T-cell (primary cell): ENCODE measurements at regions of chr4 and their contacts with region 1.

Region 1: DNA sequence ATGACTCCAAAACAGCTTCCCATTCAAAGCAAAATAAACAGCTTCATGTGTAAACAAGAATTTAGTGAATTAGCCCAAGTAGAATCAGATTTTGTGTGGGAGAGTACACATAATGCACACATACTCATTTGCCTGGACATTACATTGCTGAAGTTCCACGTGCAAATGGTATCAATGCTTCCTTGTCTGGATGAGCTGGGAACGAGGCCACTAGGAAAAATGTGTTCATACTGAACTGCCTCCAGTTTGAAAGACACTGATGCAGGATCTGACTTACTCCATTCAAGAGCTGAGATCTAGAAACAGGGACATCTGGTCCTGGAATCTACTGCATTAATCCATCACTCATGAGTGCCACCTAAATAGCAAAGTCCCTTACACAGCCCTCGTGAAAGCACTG is 228.0 kb downstream of the APBB2 start:
- DNase-seq: no peak
- ATAC-seq: no peak
- H3K4me3 ChIP-seq: no peak overlapping the region
- H3K4me3 Mint-ChIP-seq: no peak overlapping the region
- H3K27ac ChIP-seq: no peak overlapping the region
- H3K27ac Mint-ChIP-seq: no peak overlapping the region
- H3K4me1 ChIP-seq: no peaks in the 10 kb centered on the region
- H3K4me1 Mint-ChIP-seq: no peaks in the 10 kb centered on the region
- H3K27me3 ChIP-seq: peaks cover 0 to 3% of the 10 kb centered on the region in 2 experiments
- H3K27me3 Mint-ChIP-seq: peaks cover 0 to 6% of the 10 kb centered on the region in 2 donors

Region 2: DNA sequence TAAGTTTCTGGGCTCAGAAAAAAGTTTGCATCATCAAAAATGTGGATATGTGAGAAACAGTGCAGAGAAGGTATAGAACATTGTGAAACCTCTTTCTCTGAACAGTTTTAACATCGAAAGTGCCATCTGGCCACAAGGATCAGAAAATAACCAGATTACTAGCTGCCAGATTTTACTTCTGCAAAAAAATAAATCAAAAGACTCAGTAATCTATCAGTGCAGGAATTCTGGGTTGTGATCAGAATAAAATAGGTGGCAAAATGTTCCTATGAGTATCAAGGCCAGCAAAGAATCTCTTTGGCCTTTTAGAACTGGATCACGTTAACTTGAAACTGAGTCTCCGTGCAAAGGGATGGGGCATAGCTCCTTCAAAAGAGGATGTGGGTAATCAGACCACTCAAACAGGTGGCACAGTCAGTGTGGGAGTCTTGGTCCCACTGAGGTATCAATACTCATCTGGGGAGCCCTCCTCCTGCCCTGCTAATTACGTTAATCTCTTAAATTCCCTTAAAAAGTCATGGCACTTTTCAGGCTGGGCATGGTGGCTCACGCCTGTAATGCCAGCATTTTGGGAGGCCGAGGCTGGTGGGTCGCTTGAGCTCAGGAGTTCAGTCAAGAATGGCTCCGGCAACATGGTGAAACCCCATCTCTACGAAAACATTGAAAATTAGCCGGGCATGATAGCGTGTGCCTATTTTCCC is 330.0 kb before region 1 on chr4:
- CTCF ChIA-PET with region 1: no interaction called
- POLR2A ChIA-PET with region 1: interaction called in 1 of 2 experiments, 11 read pairs
- DNase-seq: no peak
- ATAC-seq: peak in 1 of 4 experiments; percentile 19
- H3K4me3 ChIP-seq: no peak overlapping the region
- H3K4me3 Mint-ChIP-seq: no peak overlapping the region
- H3K27ac ChIP-seq: no peak overlapping the region
- H3K27ac Mint-ChIP-seq: no peak overlapping the region
- H3K4me1 ChIP-seq: no peaks in the 10 kb centered on the region
- H3K4me1 Mint-ChIP-seq: peaks cover 0 to 3% (median 3%) of the 10 kb centered on the region in 3 donors
- H3K27me3 ChIP-seq: no peaks in the 10 kb centered on the region
- H3K27me3 Mint-ChIP-seq: no peaks in the 10 kb centered on the region

Region 3: GRCh38 chr4:40897557-40898203 is 88.7 kb before region 1 on chr4:
- CTCF ChIA-PET with region 1: no interaction called
- POLR2A ChIA-PET with region 1: no interaction called
- DNase-seq: peak in 33 of 35 experiments; percentile 11 to 73 (median 39)
- ATAC-seq: peak; percentile 62 to 72 (median 66)
- H3K4me3 ChIP-seq: peak overlapping the region in 1 of 2 donors; percentile 10
- H3K4me3 Mint-ChIP-seq: peak overlapping the region; percentile 43 to 69 (median 62)
- H3K27ac ChIP-seq: no peak overlapping the region
- H3K27ac Mint-ChIP-seq: no peak overlapping the region
- H3K4me1 ChIP-seq: peaks cover 0 to 5% of the 10 kb centered on the region in 2 experiments
- H3K4me1 Mint-ChIP-seq: peaks cover 4 to 8% (median 5%) of the 10 kb centered on the region in 3 donors
- H3K27me3 ChIP-seq: no peaks in the 10 kb centered on the region
- H3K27me3 Mint-ChIP-seq: no peaks in the 10 kb centered on the region